HEK293 (cell line): ENCODE measurements at regions of chr6 and their contacts with region 1.

Region 1: GRCh38 chr6:108927927-108928326 is 79.7 kb downstream of the ARMC2 start:
- H3K4me3 ChIP-seq: no peak overlapping the region
- H3K27ac ChIP-seq: no peak overlapping the region
- H3K4me1 ChIP-seq: no peaks in the 10 kb centered on the region
- CTCF ChIP-seq: no peak

Region 2: DNA sequence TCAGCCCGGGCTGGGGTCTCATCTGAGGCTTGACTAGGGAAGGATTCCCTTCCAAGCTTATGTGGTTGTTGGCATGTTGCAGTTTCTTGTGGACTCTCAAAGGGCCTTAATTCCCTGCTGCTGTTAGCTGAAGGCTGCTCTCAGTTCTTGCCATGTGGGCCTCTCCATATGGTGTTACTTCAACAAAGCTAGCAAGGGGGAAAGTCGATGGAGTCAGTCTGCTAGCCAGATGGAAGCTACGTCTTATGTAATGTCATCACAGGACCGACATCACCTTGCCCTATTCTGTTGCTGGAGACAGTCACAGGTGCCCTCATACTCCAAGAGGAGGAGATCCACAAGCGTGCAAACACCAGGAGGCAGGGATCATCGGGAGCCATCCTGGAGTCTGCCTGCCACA is 123.0 kb before region 1 on chr6:
- CTCF ChIA-PET with region 1: no interaction called
- POLR2A ChIA-PET with region 1: no interaction called
- H3K4me3 ChIP-seq: no peak overlapping the region
- H3K27ac ChIP-seq: no peak overlapping the region
- H3K4me1 ChIP-seq: 0 out of 2 replicates have a peak, but pooled peaks cover 2% of the 10 kb centered on the region
- CTCF ChIP-seq: no peak

Region 3: DNA sequence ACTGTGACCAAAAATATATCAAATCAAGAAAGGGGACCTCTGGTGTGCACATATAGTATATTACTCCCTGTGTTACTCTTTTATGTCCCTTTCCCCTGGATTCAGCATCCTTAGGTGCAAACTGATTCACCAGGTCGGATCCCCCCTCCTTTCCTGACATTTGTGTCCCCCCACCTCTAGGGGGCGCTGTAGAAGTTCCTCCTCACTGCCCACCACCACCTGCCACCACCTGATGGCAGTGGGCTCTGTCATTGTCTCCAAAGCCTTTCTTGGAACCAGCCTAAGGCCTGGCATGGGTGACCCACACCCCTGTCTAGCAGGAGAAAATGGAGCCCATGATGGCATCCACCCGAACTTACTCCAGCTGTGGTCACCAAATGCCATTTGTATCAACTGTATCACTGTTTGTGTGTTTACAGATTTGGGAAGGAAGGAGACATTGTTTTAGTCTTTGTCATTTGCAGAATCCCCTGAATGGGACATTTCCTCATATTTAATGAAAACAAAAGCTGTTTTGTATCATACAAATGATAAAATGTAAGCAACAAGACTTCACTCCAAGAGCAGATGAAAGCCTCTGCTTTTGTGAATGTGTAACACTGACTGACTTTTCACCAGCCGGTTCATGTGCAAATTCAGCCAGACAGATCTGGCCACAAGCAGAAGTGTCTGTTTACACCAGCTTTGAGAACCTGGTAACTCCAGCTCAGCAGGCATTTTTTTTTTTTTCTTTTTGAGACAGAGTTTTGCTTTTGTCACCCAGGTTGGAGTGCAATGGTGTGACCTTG is 13.5 kb before region 1 on chr6:
- CTCF ChIA-PET with region 1: interaction called, 12 read pairs
- POLR2A ChIA-PET with region 1: no interaction called
- H3K4me3 ChIP-seq: no peak overlapping the region
- H3K27ac ChIP-seq: no peak overlapping the region
- H3K4me1 ChIP-seq: no peaks in the 10 kb centered on the region
- CTCF ChIP-seq: peak; percentile 80

Region 4: DNA sequence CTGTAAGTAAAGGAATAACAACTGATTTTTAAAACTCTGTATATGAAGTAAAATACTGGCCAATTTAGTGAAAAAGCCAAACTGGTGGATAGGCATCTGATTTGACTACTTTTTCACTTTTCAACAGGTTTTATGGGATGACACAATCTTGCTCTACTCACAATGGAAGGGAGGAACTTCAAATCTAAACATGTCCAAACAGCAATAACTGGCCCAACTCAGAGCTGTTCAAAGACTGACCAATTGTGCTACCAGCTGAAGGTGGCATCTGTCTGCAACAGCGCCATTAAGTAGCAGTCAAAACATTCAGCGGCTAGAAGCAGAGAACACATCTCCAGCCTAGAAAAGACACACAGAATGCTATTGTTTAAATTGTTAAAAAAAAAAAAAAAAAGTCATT is 122.1 kb after region 1 on chr6:
- CTCF ChIA-PET with region 1: no interaction called
- POLR2A ChIA-PET with region 1: no interaction called
- H3K4me3 ChIP-seq: no peak overlapping the region
- H3K27ac ChIP-seq: no peak overlapping the region
- H3K4me1 ChIP-seq: peaks cover 30% of the 10 kb centered on the region
- CTCF ChIP-seq: no peak